ENCODE measurements at regions of chr10 and their contacts with region 1.

Region 1: GRCh38 chr10:93352638-93353383 is 129.3 kb downstream of the MYOF start:
- DNase-seq: no peak
- ATAC-seq: no peak
- H3K4me3 Mint-ChIP-seq: no peak overlapping the region
- H3K27ac Mint-ChIP-seq: no peak overlapping the region
- H3K4me1 Mint-ChIP-seq: peaks cover 4% of the 10 kb centered on the region
- H3K27me3 Mint-ChIP-seq: peaks cover 13% of the 10 kb centered on the region
- CTCF ChIP-seq: peak; percentile 86

Region 2: DNA sequence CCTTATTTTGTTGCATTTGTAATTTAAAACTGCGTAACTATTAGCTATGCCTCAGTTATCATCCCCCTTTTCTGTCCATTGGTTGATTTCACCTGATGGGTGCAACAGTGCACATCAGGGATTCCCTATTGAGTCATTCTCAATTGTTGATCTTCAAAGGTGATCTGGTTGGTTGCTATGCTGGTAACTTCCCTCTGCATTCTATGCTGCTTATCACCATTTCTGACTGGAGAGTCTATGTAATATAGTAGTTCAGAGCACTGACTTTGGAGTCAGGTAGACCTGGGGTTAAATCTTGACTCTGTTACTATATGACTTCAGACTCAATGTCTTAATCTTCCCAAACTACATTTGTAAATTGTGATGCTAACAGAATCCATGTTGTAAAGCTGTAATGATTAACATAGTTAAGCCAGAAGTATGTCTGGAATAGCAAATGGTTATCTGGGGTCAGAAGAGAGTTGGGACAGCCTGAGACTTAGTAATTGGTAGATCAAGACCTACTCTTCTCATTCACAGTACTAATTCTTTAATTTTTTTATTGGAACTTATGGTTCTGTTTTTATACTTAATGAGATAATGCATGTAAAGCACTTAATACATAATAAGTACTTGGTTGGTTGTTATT is 466.4 kb before region 1 on chr10:
- CTCF ChIA-PET with region 1: interaction called, 9 read pairs
- POLR2A ChIA-PET with region 1: no interaction called
- intact Hi-C with region 1: loop called (anchors 5 kb)
- DNase-seq: no peak
- ATAC-seq: no peak
- H3K4me3 Mint-ChIP-seq: no peak overlapping the region
- H3K27ac Mint-ChIP-seq: no peak overlapping the region
- H3K4me1 Mint-ChIP-seq: peaks cover 2% of the 10 kb centered on the region
- H3K27me3 Mint-ChIP-seq: no peaks in the 10 kb centered on the region
- CTCF ChIP-seq: no peak

Region 3: DNA sequence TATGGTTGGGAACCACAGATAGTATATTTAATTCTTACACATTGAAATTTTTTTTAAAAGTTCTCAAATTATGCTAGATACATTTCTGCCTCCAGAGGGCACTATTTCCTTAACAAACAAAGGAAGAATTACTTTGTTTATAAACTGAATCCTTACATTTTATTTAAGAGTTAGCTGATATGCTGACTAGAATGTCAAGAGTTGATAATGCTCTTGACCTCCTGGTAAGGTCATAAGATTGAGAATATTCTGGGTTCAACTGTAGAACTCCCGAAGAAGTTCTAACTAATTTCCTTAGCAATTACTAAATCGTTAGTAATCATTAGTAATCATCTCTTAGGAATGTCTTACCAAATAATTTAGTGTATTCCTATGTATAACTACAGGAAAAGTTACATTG is 387.5 kb before region 1 on chr10:
- CTCF ChIA-PET with region 1: interaction called, 8 read pairs
- POLR2A ChIA-PET with region 1: no interaction called
- intact Hi-C with region 1: loop called (anchors 10 kb)
- DNase-seq: no peak
- ATAC-seq: no peak
- H3K4me3 Mint-ChIP-seq: no peak overlapping the region
- H3K27ac Mint-ChIP-seq: no peak overlapping the region
- H3K4me1 Mint-ChIP-seq: no peaks in the 10 kb centered on the region
- H3K27me3 Mint-ChIP-seq: no peaks in the 10 kb centered on the region
- CTCF ChIP-seq: peak; percentile 62

Region 4: DNA sequence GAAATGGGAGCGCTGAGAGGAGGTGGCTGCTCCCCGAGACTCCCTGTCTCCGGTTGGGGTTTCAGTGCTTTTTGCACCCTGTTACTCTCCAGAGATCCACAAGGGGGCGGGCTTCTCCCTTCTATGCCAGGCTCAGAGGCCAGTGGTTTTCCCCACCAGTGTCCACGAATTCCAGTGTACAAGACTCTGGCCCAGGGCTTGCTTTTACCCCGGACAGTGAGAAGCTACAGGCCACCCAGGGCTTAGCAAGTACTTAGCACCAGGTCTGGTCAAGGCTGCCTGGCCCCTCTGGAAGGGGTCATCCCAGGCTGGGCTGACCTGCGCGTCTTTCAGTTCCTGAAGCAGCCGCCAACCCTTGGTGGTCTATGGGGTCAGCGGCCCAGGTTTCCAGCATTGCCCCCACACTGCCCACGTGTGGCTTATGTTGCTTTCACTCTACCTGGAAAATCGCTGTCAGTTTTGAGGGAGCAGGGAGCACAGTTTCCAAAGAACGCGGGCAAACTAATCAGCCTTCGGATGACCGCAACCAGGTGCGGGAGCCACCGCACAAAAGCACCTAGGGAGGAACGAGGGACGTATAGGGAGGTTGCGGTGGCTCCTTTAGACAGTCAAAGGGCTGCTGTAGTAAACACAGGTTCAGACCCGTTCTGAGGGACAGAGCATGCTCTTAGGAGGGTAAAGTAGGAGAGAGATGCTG is 272.3 kb before region 1 on chr10:
- CTCF ChIA-PET with region 1: interaction called, 9 read pairs
- POLR2A ChIA-PET with region 1: no interaction called
- intact Hi-C with region 1: loop called (anchors 1 kb)
- DNase-seq: peak; percentile 64
- ATAC-seq: peak; percentile 72
- H3K4me3 Mint-ChIP-seq: no peak overlapping the region
- H3K27ac Mint-ChIP-seq: no peak overlapping the region
- H3K4me1 Mint-ChIP-seq: peaks cover 7% of the 10 kb centered on the region
- H3K27me3 Mint-ChIP-seq: peaks cover 38% of the 10 kb centered on the region
- CTCF ChIP-seq: peak; percentile 92

Region 5: DNA sequence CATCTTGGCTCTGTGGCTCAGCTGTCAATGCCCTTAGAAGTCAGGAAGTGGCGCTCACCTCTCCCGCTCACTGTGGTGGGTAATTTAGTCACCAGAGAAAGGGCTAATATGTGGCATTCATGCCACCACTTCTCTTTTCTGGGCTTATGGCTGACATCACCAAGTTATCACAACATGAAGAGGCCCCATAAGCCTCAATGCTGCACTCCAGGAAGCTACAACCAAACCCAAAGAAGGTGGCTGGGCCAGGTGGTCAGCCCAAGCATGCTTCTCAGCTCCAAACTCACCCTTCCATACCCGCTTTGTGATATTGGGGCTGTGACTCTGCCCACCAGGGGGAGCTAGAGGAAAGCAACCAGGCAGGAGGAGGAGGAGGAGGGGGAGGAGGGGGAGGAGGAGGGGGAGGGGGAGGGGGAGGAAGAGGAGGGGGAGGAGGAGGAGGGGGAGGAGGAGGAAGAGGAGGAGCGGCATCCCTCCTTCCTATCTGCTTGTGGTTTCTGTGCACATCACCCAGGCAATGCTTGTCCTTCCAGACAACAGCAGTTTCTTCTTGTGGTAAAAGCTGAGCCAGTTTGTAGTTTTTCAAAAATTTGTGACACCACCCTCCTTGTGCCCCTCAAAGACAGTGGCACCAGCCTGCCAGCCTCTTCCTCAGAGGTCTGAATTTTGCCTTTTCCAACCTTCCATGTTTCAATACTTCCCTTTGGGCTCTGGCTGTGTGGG is 237.0 kb before region 1 on chr10:
- CTCF ChIA-PET with region 1: interaction called, 23 read pairs
- POLR2A ChIA-PET with region 1: no interaction called
- intact Hi-C with region 1: loop called (anchors 10 kb)
- DNase-seq: peak; percentile 80
- ATAC-seq: peak; percentile 80
- H3K4me3 Mint-ChIP-seq: no peak overlapping the region
- H3K27ac Mint-ChIP-seq: no peak overlapping the region
- H3K4me1 Mint-ChIP-seq: peaks cover 9% of the 10 kb centered on the region
- H3K27me3 Mint-ChIP-seq: peaks cover 8% of the 10 kb centered on the region
- CTCF ChIP-seq: peak; percentile 55

Region 6: DNA sequence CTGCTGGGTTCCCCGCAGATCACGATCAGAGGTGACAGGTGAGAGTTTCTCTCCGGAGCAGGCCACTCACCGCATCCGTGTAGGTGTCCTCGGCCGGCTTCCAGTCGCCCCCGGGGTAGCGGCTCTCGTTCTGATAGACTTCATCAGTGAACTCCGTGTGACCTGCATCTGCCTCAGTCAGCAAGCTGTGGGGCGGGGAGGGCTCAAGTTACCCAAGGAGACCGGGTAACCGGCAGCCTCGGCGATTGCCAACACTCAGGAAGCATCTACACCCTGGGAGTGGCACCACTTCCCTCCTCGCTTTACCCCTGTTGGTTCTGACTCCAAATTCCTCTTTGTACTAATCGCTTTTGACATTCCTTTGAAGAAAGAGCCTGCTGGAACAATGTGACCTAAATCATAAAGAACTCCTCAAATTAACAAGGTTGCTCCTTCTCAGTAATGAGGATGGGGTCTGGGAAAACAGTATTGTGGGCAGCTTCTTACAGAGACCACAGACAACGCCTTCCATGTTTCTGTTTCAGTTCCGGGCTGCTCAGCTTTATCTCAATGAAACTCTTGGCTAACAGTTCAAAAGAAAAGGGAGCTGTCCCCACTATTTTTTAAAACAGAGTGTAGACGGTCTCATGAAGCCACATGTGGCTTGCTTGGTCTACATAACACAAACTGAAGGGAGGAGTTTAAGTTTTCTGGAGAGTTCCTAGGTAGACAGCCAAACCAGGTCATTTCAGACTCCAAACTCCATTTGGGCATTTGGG is 11.3 kb after region 1 on chr10:
- CTCF ChIA-PET with region 1: interaction called, 12 read pairs
- POLR2A ChIA-PET with region 1: no interaction called
- intact Hi-C with region 1: no loop called
- DNase-seq: no peak
- ATAC-seq: no peak
- H3K4me3 Mint-ChIP-seq: no peak overlapping the region
- H3K27ac Mint-ChIP-seq: no peak overlapping the region
- H3K4me1 Mint-ChIP-seq: no peaks in the 10 kb centered on the region
- H3K27me3 Mint-ChIP-seq: peaks cover 4% of the 10 kb centered on the region
- CTCF ChIP-seq: no peak

Region 7: GRCh38 chr10:93386631-93387369 is 34.0 kb after region 1 on chr10:
- CTCF ChIA-PET with region 1: no interaction called
- POLR2A ChIA-PET with region 1: no interaction called
- intact Hi-C with region 1: no loop called
- DNase-seq: peak; percentile 26
- ATAC-seq: peak; percentile 66
- H3K4me3 Mint-ChIP-seq: no peak overlapping the region
- H3K27ac Mint-ChIP-seq: peak overlapping the region; percentile 65
- H3K4me1 Mint-ChIP-seq: peaks cover 16% of the 10 kb centered on the region
- H3K27me3 Mint-ChIP-seq: no peaks in the 10 kb centered on the region
- CTCF ChIP-seq: no peak

Region 8: GRCh38 chr10:93420091-93420490 is 67.3 kb after region 1 on chr10:
- CTCF ChIA-PET with region 1: no interaction called
- POLR2A ChIA-PET with region 1: no interaction called
- intact Hi-C with region 1: no loop called
- DNase-seq: no peak
- ATAC-seq: no peak
- H3K4me3 Mint-ChIP-seq: no peak overlapping the region
- H3K27ac Mint-ChIP-seq: no peak overlapping the region
- H3K4me1 Mint-ChIP-seq: peaks cover 5% of the 10 kb centered on the region
- H3K27me3 Mint-ChIP-seq: no peaks in the 10 kb centered on the region
- CTCF ChIP-seq: no peak